Psoas muscle (tissue), 8 donors: ENCODE measurements at regions of chr4 and their contacts with region 1.

Region 1: DNA sequence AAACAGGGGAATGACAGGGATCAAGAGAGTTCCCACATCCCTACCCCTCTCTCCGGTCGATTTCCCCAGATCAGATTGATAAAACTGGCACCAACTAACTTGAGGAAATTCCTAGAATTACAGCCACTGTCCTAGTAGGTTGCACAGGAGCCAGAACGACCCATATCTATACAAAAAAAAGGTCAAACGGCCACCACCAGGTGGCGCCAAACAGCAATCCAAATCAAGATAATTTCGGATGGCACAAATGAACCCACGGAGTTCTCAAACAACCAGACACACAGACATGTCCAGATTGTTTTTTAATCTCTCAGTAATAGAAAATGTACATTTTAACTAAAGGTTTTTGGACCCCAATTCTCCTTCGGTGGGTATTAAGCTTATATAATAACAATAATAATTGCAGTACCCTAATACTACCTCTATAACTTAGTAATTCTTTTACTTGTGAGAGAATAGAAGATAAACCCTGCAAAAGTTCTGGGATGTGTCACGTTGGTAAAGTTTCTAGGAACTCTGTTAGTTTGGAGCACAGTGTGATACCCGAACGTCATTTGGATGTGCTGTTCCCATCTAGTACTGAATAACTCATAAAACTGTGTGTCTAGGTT is 212.6 kb downstream of the SPOCK3 start:
- DNase-seq: peak; percentile 50 to 68
- ATAC-seq: peak in 3 of 4 donors; percentile 47 to 81 (median 60)
- H3K4me3 ChIP-seq: no peak overlapping the region
- H3K27ac ChIP-seq: no peak overlapping the region
- H3K4me1 ChIP-seq: no peaks in the 10 kb centered on the region
- H3K27me3 ChIP-seq: no peaks in the 10 kb centered on the region
- CTCF ChIP-seq: peak; percentile 85

Region 2: DNA sequence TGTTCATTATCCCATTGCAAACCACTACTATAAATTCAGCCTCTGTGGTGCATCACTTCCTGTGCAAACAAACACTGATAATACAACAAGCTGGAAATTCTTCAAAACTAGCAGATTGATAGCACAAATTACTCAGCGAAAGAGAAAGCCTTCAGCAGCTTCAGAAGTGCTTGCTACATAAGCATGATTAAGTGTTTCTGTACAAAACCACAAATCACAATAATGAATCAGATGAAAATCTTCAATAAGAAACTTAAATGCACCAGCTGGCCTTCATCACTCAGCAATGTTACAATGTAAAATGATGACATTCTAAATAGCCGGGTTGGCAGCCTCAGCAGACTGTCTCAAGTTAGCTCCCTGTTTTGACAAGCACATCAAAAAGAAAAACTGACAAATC is 49.6 kb before region 1 on chr4:
- intact Hi-C with region 1: no loop called
- DNase-seq: no peak
- ATAC-seq: no peak
- H3K4me3 ChIP-seq: no peak overlapping the region
- H3K27ac ChIP-seq: no peak overlapping the region
- H3K4me1 ChIP-seq: no peaks in the 10 kb centered on the region
- H3K27me3 ChIP-seq: no peaks in the 10 kb centered on the region
- CTCF ChIP-seq: no peak

Region 3: GRCh38 chr4:166987026-166987425 is 34.6 kb before region 1 on chr4:
- intact Hi-C with region 1: no loop called
- DNase-seq: no peak
- ATAC-seq: no peak
- H3K4me3 ChIP-seq: no peak overlapping the region
- H3K27ac ChIP-seq: no peak overlapping the region
- H3K4me1 ChIP-seq: no peaks in the 10 kb centered on the region
- H3K27me3 ChIP-seq: no peaks in the 10 kb centered on the region
- CTCF ChIP-seq: no peak

Region 4: DNA sequence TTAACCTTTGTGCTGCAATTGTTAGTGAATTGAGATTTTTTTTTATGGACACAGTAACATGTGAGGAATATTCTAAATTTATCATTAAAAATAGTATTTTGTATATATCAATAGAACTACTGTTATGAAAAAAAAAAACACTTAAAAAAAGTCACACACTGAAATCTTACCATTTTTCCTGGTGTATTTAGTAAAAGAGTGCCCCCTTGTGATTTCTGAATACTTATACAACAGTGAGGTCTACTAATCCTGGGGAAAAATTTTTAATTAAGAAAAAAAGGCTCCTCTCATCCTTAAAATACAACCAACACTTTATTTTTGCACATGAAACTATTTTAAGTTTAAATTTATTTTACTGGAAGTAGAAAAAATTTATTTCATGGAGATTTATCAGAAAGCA is 269.0 kb after region 1 on chr4:
- intact Hi-C with region 1: loop called in 1 of 2 experiments (anchors 10 kb)
- DNase-seq: no peak
- ATAC-seq: no peak
- H3K4me3 ChIP-seq: no peak overlapping the region
- H3K27ac ChIP-seq: no peak overlapping the region
- H3K4me1 ChIP-seq: no peaks in the 10 kb centered on the region
- H3K27me3 ChIP-seq: no peaks in the 10 kb centered on the region
- CTCF ChIP-seq: peak; percentile 30

Region 5: DNA sequence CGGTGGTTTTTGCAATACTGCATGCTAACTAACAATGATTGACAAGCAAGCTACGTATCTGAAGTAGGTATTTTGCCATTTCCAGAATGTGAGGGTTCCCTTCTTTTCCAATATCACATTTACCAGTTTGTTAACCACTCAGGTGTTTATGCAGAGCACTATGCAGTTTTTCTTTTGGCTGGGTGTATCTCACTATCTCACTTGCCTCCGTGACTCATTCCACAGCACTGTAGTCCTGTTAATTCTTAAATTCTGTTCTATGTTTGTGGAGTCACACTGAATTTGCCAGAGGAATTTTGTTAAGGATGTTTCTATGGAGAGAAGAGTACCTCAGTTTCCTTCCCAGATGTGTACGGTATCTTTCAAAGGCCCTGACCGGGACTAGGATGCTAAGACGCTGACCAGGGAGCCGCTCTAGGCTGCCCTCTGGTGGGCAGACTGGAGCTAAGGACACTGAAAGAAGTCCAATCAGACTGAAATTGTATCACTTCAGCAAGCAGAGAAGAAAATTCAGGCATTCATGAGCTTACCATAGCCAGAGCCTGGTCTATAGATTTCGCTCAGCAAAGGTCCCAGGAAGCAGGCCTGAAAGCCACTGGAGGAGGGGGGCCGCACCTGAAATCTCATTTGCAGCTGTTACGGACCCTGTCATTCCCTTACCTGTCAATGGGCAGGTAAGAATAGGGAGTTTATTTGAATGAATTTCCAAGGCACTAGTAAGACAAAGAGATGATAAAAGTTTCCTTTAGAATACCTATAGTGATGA is 601.0 kb after region 1 on chr4:
- intact Hi-C with region 1: loop called (anchors 5 to 10 kb)
- DNase-seq: peak; percentile 15 to 53
- ATAC-seq: no peak
- H3K4me3 ChIP-seq: no peak overlapping the region
- H3K27ac ChIP-seq: no peak overlapping the region
- H3K4me1 ChIP-seq: no peaks in the 10 kb centered on the region
- H3K27me3 ChIP-seq: peaks cover 0 to 3% (median 0%) of the 10 kb centered on the region in 3 donors
- CTCF ChIP-seq: peak; percentile 47

Region 6: GRCh38 chr4:168076989-168077725 is 1055.5 kb after region 1 on chr4:
- intact Hi-C with region 1: loop called (anchors 5 to 10 kb)
- DNase-seq: peak in 1 of 2 donors; percentile 12
- ATAC-seq: peak in 2 of 4 donors; percentile 59 to 68
- H3K4me3 ChIP-seq: no peak overlapping the region
- H3K27ac ChIP-seq: no peak overlapping the region
- H3K4me1 ChIP-seq: no peaks in the 10 kb centered on the region
- H3K27me3 ChIP-seq: no peaks in the 10 kb centered on the region
- CTCF ChIP-seq: peak; percentile 86

Region 7: GRCh38 chr4:168153596-168154440 is 1132.2 kb after region 1 on chr4:
- intact Hi-C with region 1: loop called in 1 of 2 experiments (anchors 10 kb)
- DNase-seq: peak; percentile 63 to 84
- ATAC-seq: peak; percentile 57 to 91 (median 68)
- H3K4me3 ChIP-seq: peak overlapping the region; percentile 51
- H3K27ac ChIP-seq: no peak overlapping the region
- H3K4me1 ChIP-seq: no peaks in the 10 kb centered on the region
- H3K27me3 ChIP-seq: no peaks in the 10 kb centered on the region
- CTCF ChIP-seq: peak; percentile 67